B cell (primary cell): ENCODE measurements at regions of chr1 and their contacts with region 1.

Region 1: DNA sequence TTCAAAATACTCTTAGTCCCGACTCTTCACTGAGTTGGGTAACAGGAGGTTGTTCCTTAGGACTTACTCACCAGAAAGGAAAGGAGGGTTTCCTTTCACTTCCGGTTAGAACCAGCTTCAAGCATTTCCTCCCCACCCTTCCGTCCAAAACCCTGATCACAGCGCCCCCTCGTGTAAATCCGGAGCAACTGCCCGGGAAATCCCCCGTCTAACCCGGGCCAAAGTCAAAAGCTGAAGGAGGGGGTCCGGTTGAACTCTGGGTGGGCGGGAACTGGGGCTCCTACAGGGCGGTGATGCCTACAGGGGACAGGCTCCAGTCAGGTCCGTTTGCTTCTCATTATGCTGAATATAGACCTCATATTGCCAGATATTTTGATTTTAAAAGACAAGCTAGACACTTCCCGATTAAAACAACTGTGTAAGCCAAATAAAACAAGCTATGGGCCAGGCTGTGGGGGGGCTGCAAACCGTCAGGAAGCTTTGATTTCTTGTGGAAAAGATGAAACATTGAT is 15.0 kb upstream of the MTARC2 start:
- DNase-seq: peak; percentile 85
- ATAC-seq: peak; percentile 97
- H3K4me3 ChIP-seq: peak overlapping the region in 2 of 5 experiments; percentile 11 to 26
- H3K4me3 Mint-ChIP-seq: peak overlapping the region; percentile 57
- H3K27ac ChIP-seq: no peak overlapping the region
- H3K27ac Mint-ChIP-seq: peak overlapping the region; percentile 72
- H3K4me1 ChIP-seq: peaks cover 11% of the 10 kb centered on the region in 2 donors
- H3K4me1 Mint-ChIP-seq: peaks cover 23% of the 10 kb centered on the region
- H3K27me3 ChIP-seq: no peaks in the 10 kb centered on the region
- H3K27me3 Mint-ChIP-seq: no peaks in the 10 kb centered on the region
- CTCF ChIP-seq: peak; percentile 87

Region 2: DNA sequence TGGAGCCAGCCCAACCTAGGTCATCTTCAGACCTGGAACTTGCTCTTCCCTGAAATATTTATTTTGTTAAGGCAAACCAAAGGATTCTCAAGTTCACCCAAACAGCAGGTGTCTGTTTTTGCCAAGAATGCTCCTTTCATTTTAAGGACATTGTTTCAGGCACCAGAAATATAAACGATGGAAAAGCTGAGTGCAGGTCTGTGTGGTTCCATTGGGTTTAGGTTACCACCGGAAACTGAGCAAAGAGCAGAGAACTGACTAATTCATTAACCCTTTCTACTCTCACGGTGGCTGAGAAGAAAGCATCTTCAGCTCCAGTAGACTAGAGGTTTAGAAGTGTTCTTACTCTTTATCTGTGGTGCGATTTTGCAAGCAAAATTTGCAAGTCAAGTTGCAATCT is 1082.3 kb before region 1 on chr1:
- CTCF ChIA-PET with region 1: no interaction called
- POLR2A ChIA-PET with region 1: no interaction called
- intact Hi-C with region 1: no loop called
- DNase-seq: no peak
- ATAC-seq: no peak
- H3K4me3 ChIP-seq: no peak overlapping the region
- H3K4me3 Mint-ChIP-seq: no peak overlapping the region
- H3K27ac ChIP-seq: no peak overlapping the region
- H3K27ac Mint-ChIP-seq: no peak overlapping the region
- H3K4me1 ChIP-seq: no peaks in the 10 kb centered on the region
- H3K4me1 Mint-ChIP-seq: no peaks in the 10 kb centered on the region
- H3K27me3 ChIP-seq: no peaks in the 10 kb centered on the region
- H3K27me3 Mint-ChIP-seq: peaks cover 6% of the 10 kb centered on the region
- CTCF ChIP-seq: no peak

Region 3: DNA sequence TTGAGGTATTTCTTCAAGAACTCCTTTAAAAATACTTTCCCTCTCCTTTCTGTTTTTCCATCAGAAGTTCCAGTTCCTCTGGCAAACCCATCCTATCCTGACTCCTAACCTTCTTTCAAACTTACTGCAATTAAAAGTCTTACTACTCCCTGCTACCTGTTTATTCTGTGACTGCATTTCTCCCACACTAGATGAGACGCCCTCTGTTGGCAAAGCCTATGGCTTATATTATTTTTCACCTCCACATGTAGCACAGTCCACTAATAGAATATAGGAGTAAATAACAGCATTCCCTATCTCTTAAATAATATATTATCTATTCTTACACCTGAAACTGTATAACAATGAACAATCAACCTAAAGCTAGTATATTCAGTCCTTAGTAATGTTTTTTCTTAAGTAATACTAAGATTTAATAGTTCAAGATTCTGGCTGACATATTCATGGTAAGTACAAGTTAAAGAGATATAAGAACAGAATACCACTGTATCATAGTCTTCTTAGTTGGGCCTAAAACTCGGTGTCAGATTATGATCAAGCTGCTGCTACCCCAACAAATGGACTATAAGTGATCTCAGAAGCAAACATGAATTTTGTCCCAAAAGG is 515.7 kb before region 1 on chr1:
- CTCF ChIA-PET with region 1: interaction called, 14 read pairs
- POLR2A ChIA-PET with region 1: no interaction called
- intact Hi-C with region 1: no loop called
- DNase-seq: peak; percentile 29
- ATAC-seq: no peak
- H3K4me3 ChIP-seq: no peak overlapping the region
- H3K4me3 Mint-ChIP-seq: no peak overlapping the region
- H3K27ac ChIP-seq: no peak overlapping the region
- H3K27ac Mint-ChIP-seq: peak overlapping the region; percentile 3
- H3K4me1 ChIP-seq: peaks cover 18 to 31% of the 10 kb centered on the region in 2 donors
- H3K4me1 Mint-ChIP-seq: peaks cover 48% of the 10 kb centered on the region
- H3K27me3 ChIP-seq: no peaks in the 10 kb centered on the region
- H3K27me3 Mint-ChIP-seq: no peaks in the 10 kb centered on the region
- CTCF ChIP-seq: peak; percentile 61

Region 4: GRCh38 chr1:220680085-220680687 is 53.0 kb before region 1 on chr1:
- CTCF ChIA-PET with region 1: interaction called, 55 read pairs
- POLR2A ChIA-PET with region 1: no interaction called
- intact Hi-C with region 1: loop called (anchors 1 kb)
- DNase-seq: peak; percentile 59
- ATAC-seq: peak; percentile 87
- H3K4me3 ChIP-seq: no peak overlapping the region
- H3K4me3 Mint-ChIP-seq: no peak overlapping the region
- H3K27ac ChIP-seq: no peak overlapping the region
- H3K27ac Mint-ChIP-seq: no peak overlapping the region
- H3K4me1 ChIP-seq: peaks cover 0 to 3% of the 10 kb centered on the region in 2 donors
- H3K4me1 Mint-ChIP-seq: peaks cover 3% of the 10 kb centered on the region
- H3K27me3 ChIP-seq: no peaks in the 10 kb centered on the region
- H3K27me3 Mint-ChIP-seq: peaks cover 3% of the 10 kb centered on the region
- CTCF ChIP-seq: peak; percentile 85

Region 5: GRCh38 chr1:220711056-220711809 is 21.9 kb before region 1 on chr1:
- CTCF ChIA-PET with region 1: interaction called, 10 read pairs
- POLR2A ChIA-PET with region 1: interaction called, 5 read pairs
- intact Hi-C with region 1: no loop called
- DNase-seq: peak; percentile 61
- ATAC-seq: peak; percentile 86
- H3K4me3 ChIP-seq: no peak overlapping the region
- H3K4me3 Mint-ChIP-seq: peak overlapping the region; percentile 74
- H3K27ac ChIP-seq: peak overlapping the region in 1 of 2 donors; percentile 16
- H3K27ac Mint-ChIP-seq: peak overlapping the region; percentile 87
- H3K4me1 ChIP-seq: peaks cover 32 to 38% of the 10 kb centered on the region in 2 donors
- H3K4me1 Mint-ChIP-seq: peaks cover 41% of the 10 kb centered on the region
- H3K27me3 ChIP-seq: no peaks in the 10 kb centered on the region
- H3K27me3 Mint-ChIP-seq: no peaks in the 10 kb centered on the region
- CTCF ChIP-seq: no peak

Region 6: DNA sequence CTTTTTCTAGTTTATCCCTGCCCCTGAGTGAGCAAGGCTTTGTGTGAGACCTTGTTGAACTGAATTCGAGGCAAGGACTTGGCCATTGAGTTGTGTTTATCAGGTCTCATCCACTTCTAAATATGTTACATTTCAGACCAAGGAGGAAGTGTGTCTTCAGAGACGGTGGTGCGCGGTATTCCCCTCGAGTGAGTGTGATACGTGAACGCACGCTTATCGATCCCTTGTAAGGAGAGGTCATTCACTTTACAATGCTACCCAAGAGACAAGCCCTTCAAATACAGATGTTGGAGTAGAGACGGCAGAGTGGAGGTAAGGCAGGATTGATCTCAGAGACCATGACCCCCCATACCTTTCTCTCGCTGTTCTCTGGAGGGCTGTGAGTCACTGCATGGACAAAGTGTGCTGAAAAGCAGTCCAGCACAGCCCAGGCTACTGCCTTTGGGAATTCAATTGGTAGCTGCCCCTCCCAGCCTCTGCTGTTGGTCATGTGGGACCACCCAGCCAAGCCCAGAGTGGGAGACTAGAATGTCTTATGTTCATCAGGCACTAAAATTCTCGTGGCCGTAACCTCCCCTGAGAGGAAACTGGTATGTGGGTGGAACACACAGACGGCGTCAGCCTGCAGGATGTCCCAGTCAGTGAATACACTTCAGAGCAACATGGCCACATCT is 37.2 kb after region 1 on chr1:
- CTCF ChIA-PET with region 1: interaction called, 29 read pairs
- POLR2A ChIA-PET with region 1: interaction called, 4 read pairs
- intact Hi-C with region 1: no loop called
- DNase-seq: peak; percentile 80
- ATAC-seq: peak; percentile 87
- H3K4me3 ChIP-seq: peak overlapping the region in 4 of 5 experiments; percentile 43 to 78 (median 55)
- H3K4me3 Mint-ChIP-seq: peak overlapping the region; percentile 89
- H3K27ac ChIP-seq: peak overlapping the region; percentile 99 to 100
- H3K27ac Mint-ChIP-seq: peak overlapping the region; percentile 99
- H3K4me1 ChIP-seq: peaks cover 21% of the 10 kb centered on the region in 2 donors
- H3K4me1 Mint-ChIP-seq: peaks cover 42% of the 10 kb centered on the region
- H3K27me3 ChIP-seq: no peaks in the 10 kb centered on the region
- H3K27me3 Mint-ChIP-seq: no peaks in the 10 kb centered on the region
- CTCF ChIP-seq: no peak

Region 7: DNA sequence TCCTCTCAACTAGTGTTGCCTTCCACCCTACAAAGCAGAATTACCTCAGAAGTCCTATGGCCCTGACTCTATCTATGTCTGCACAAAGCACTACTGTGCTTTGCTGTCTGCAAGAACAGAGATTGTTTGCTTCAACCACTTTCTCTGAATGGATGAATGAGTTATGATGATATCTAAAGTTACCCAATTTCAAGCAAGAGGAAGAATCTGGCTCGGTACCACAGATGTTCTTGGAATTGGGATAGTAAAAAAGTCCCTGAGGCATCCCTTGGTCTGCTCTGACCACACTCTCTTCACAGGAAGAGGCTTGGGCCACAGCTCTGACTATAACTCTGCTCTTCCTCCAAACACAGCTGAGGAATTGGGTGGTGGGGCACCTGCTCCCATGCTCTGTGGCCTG is 84.8 kb after region 1 on chr1:
- CTCF ChIA-PET with region 1: no interaction called
- POLR2A ChIA-PET with region 1: no interaction called
- intact Hi-C with region 1: no loop called
- DNase-seq: no peak
- ATAC-seq: no peak
- H3K4me3 ChIP-seq: no peak overlapping the region
- H3K4me3 Mint-ChIP-seq: no peak overlapping the region
- H3K27ac ChIP-seq: no peak overlapping the region
- H3K27ac Mint-ChIP-seq: no peak overlapping the region
- H3K4me1 ChIP-seq: no peaks in the 10 kb centered on the region
- H3K4me1 Mint-ChIP-seq: no peaks in the 10 kb centered on the region
- H3K27me3 ChIP-seq: no peaks in the 10 kb centered on the region
- H3K27me3 Mint-ChIP-seq: peaks cover 17% of the 10 kb centered on the region
- CTCF ChIP-seq: no peak